Endothelial cell of umbilical vein (primary cell): ENCODE measurements at regions of chr4 and their contacts with region 1.

Region 1: GRCh38 chr4:86043755-86044592 is 315.9 kb downstream of the MAPK10 start:
- DNase-seq: peak; percentile 77
- H3K4me3 ChIP-seq: no peak overlapping the region
- H3K27ac ChIP-seq: no peak overlapping the region
- H3K4me1 ChIP-seq: no peaks in the 10 kb centered on the region
- H3K27me3 ChIP-seq: peaks cover 6 to 17% of the 10 kb centered on the region in 2 experiments
- CTCF ChIP-seq: peak; percentile 32 to 41
- POLR2A ChIP-seq: no peak

Region 2: DNA sequence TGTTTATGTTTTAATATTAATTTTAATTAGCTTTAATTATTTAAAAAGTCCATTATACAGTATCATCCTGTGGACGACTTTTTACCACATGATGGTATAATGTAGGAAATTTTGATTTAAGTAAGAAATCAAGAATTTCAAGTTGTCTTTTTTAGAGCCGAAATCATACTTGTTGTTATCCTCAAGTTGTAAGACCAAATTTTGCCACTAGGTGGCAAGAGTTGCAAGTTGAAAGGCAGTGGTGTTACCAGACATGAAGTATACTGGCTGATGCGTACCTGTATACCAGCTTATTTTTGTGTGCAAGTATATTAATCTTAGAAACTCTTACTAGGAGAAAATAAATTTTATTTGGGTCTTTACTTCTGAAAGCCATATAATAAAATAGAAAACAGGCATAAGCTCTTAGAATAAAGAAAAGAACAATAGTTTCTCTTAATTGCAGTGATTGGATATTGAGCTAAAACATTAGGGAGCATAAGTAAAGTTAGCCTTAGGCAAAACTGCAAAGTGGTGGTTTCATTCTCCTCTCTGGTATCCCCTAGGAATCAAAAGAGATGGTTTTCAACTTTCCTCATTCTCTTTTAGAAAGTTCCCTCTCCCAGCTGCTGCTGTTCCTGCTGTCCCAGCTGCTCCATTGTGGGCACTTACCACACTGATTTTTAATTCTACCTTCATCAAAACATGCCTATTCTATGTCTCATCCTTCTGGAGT is 959.4 kb before region 1 on chr4:
- CTCF ChIA-PET with region 1: interaction called, 15 read pairs
- POLR2A ChIA-PET with region 1: no interaction called
- dilution Hi-C with region 1: no loop called
- intact Hi-C with region 1: no loop called
- DNase-seq: peak; percentile 67
- H3K4me3 ChIP-seq: no peak overlapping the region
- H3K27ac ChIP-seq: no peak overlapping the region
- H3K4me1 ChIP-seq: no peaks in the 10 kb centered on the region
- H3K27me3 ChIP-seq: peaks cover 4 to 11% of the 10 kb centered on the region in 2 experiments
- CTCF ChIP-seq: peak; percentile 43 to 47
- POLR2A ChIP-seq: no peak

Region 3: DNA sequence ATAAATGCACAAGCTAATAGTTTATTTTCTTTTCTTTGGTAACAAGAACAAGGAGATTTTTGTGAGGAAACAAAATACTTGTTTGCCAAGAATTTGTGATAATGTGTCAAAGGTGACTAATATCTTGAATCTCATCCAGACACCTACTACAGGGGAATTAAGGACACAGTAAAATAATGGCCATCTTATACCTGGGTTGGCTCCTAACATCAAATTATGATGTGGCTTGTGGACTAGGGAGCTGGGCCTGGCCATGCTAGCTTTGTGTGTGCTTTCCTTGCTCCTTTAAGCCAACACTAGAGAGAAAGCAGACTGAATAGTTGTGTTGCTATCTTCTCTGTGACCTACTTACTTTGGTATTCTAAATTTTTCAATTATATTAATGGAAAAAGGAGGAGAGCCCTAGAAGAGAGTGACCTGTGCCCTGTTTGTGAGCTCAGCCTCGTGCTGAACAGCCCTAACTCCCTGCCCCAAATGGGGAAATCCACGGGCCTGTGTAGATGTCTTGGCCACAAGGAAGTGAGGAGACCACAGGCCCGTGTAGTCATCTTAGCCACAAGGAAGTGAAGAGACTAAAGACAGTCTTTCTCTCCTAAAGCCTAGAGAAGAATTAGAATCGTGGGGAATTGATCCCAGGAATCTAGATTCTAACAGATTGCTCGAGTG is 545.8 kb before region 1 on chr4:
- CTCF ChIA-PET with region 1: no interaction called
- POLR2A ChIA-PET with region 1: no interaction called
- dilution Hi-C with region 1: no loop called
- intact Hi-C with region 1: loop called (anchors 5 kb)
- DNase-seq: no peak
- H3K4me3 ChIP-seq: no peak overlapping the region
- H3K27ac ChIP-seq: no peak overlapping the region
- H3K4me1 ChIP-seq: peaks cover 16% of the 10 kb centered on the region
- H3K27me3 ChIP-seq: no peaks in the 10 kb centered on the region
- CTCF ChIP-seq: no peak
- POLR2A ChIP-seq: no peak

Region 4: GRCh38 chr4:85968945-85969819 is 74.8 kb before region 1 on chr4:
- CTCF ChIA-PET with region 1: interaction called, 24 read pairs
- POLR2A ChIA-PET with region 1: no interaction called
- dilution Hi-C with region 1: no loop called
- intact Hi-C with region 1: loop called (anchors 1 kb)
- DNase-seq: peak; percentile 82
- H3K4me3 ChIP-seq: no peak overlapping the region
- H3K27ac ChIP-seq: peak overlapping the region; percentile 43
- H3K4me1 ChIP-seq: peaks cover 52% of the 10 kb centered on the region
- H3K27me3 ChIP-seq: no peaks in the 10 kb centered on the region
- CTCF ChIP-seq: peak; percentile 16 to 38
- POLR2A ChIP-seq: no peak

Region 5: GRCh38 chr4:86130160-86130933 is 86.4 kb after region 1 on chr4:
- CTCF ChIA-PET with region 1: no interaction called
- POLR2A ChIA-PET with region 1: no interaction called
- dilution Hi-C with region 1: no loop called
- intact Hi-C with region 1: no loop called
- DNase-seq: no peak
- H3K4me3 ChIP-seq: no peak overlapping the region
- H3K27ac ChIP-seq: no peak overlapping the region
- H3K4me1 ChIP-seq: no peaks in the 10 kb centered on the region
- H3K27me3 ChIP-seq: peaks cover 0 to 3% of the 10 kb centered on the region in 2 experiments
- CTCF ChIP-seq: no peak
- POLR2A ChIP-seq: no peak

Region 6: DNA sequence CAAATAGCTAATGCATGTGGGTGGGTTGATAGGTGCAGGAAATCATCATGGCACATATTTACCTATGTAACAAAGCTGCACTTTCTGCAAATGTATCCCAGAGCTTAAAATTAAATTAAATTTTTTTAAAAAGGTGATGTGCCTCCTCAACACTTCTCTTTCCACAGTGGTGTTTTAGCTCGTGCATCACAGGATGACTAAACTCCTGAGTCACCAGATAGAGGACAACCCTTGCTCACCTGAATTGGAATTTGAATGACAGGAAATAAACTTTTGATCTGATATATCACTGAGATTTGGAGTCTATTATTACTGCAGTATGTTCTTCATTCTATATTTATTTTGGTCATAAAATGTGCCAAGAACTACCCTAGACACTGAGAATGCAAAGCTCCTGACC is 130.5 kb after region 1 on chr4:
- CTCF ChIA-PET with region 1: no interaction called
- POLR2A ChIA-PET with region 1: no interaction called
- dilution Hi-C with region 1: no loop called
- intact Hi-C with region 1: no loop called
- DNase-seq: no peak
- H3K4me3 ChIP-seq: no peak overlapping the region
- H3K27ac ChIP-seq: no peak overlapping the region
- H3K4me1 ChIP-seq: no peaks in the 10 kb centered on the region
- H3K27me3 ChIP-seq: peaks cover 0 to 11% of the 10 kb centered on the region in 2 experiments
- CTCF ChIP-seq: no peak
- POLR2A ChIP-seq: no peak

Region 7: DNA sequence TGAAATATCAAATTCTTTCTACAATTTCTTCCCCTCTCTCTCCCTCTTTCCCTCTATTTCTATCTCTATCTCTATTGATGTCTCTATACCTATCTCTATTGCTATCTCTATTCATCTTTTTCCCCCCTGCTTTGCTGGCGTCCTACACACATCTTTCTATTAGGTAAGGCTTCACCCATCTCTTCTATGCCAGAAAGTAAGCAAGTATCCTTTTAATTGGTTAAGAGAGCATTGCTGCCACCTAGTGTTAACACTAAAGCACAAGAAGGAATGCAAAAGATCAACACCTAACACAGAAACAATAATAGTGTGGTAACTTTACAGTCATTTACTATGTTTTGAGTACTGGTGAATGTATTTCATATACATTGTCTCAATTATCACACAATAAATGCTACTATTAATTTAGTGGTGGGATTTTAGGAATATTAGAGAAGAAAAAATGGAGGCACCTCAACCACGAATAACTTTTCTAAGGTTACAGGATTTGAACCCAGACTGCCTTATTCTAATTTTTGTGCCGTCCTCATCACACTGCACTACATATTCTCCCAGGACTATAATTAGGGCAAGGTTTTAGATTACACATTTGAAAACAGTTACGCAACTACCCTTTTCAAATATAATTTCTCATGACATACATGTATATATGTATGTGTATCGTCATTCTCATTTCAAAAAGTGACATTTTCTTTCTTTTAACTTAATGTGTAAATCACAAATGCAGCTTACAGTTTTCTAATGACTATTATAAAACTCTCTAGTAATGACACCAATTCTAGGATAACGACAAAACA is 851.9 kb after region 1 on chr4:
- CTCF ChIA-PET with region 1: no interaction called
- POLR2A ChIA-PET with region 1: no interaction called
- dilution Hi-C with region 1: no loop called
- intact Hi-C with region 1: loop called (anchors 5 kb)
- DNase-seq: peak; percentile 72
- H3K4me3 ChIP-seq: no peak overlapping the region
- H3K27ac ChIP-seq: no peak overlapping the region
- H3K4me1 ChIP-seq: peaks cover 16% of the 10 kb centered on the region
- H3K27me3 ChIP-seq: no peaks in the 10 kb centered on the region
- CTCF ChIP-seq: peak; percentile 46 to 52
- POLR2A ChIP-seq: no peak